ENCODE measurements at regions of chr9 and their contacts with region 1.

Region 1: DNA sequence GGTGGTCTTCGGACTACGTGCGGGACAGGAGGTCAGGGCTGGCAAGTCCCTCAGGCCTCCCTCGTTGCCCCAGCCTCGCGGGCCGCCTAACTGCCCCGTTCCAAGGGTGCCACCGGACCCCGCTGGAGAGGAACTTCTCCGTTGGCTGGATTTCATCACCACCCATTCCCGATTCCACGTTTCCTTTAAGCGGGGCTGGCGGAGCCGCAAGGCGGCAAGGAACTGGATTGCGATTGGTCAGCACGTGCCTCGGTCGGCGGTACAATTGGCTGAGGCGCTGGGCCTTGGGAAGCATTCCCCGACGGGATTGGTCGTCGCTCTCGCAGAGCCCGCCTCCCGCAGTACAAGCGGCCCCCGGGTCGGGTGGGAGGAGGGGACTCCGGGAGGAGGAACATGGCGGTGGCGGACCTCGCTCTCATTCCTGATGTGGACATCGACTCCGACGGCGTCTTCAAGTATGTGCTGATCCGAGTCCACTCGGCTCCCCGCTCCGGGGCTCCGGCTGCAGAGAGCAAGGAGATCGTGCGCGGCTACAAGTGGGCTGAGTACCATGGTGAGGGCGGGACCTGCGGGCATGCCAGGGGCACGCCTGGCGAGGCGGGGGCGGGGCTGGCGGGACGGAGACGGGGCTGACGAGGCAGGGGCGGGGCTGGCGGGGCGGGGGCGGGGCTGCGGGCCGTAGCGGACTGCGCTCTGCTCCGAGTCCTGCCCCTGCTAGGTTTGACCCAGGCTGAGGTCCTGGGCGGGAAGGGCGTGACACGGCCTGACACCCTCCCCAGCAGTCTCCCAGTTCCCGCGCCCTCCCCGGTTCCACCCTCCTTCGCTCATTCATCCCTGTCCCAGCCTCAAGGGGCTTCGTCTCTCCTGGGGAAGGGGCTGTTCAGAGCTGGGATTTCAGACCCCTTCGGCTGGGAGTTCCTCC is at the start of gene PHPT1:
- H3K4me3 Mint-ChIP-seq: peak within 1 kb of the TSS; percentile 97
- H3K27ac Mint-ChIP-seq: peak within 1 kb of the TSS; percentile 94
- H3K4me1 Mint-ChIP-seq: peaks cover 37% of the 10 kb centered on the region
- H3K27me3 Mint-ChIP-seq: peaks cover 22% of the 10 kb centered on the region

Region 2: GRCh38 chr9:136790927-136791641 is 58.2 kb before region 1 on chr9 and contains the start of gene TMEM141:
- intact Hi-C with region 1: loop called (anchors 5 kb)
- H3K4me3 Mint-ChIP-seq: peak within 1 kb of the TSS; percentile 85
- H3K27ac Mint-ChIP-seq: peak within 1 kb of the TSS; percentile 89
- H3K4me1 Mint-ChIP-seq: peaks cover 26% of the 10 kb centered on the region
- H3K27me3 Mint-ChIP-seq: peaks cover 8% of the 10 kb centered on the region

Region 3: DNA sequence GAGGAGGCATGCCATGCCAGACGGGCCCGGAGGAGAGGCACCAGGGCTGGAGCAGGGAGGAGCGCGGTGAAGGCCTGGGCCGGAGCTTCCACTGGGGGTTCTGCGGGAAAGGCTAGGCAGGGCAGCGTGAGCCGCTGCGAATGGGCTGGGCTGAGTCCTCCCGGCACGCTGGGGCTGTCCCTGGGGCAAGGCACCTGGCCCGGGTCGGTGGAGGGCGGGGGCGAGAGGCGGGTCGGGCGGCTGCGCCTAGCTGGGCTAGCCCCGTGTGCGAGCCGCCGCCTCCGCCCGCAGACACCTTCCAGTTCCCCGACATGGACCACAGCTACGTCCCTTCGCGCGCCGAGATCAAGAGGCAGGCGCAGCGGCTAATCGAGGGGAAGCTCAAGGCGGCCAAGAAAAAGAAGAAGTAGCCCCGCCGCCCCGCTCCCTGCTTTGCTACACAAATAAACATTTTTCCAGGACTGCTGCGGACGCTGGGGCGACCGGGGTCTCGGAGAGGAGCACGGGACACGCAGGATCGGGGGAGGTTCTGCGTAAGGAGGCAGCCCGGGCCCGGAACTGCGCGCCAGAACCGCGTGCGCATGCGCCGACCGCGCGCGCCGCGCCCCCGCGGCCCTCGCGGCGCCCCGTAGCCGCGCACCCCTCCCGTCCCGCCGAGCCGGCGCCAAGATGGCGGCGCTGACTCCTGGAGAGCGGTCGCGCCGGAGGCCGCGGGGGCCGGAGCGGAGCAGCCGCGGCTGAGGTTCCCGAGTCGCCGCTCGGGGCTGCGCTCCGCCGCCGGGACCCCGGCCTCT is 41.8 kb before region 1 on chr9 and contains the start of gene RABL6:
- intact Hi-C with region 1: loop called (anchors 2 kb)
- H3K4me3 Mint-ChIP-seq: peak within 1 kb of the TSS; percentile 86
- H3K27ac Mint-ChIP-seq: peak within 1 kb of the TSS; percentile 84
- H3K4me1 Mint-ChIP-seq: peaks cover 39% of the 10 kb centered on the region
- H3K27me3 Mint-ChIP-seq: peaks cover 10% of the 10 kb centered on the region

Region 4: GRCh38 chr9:136865735-136866103 is 16.4 kb after region 1 on chr9:
- intact Hi-C with region 1: loop called (anchors 1 kb)
- H3K4me3 Mint-ChIP-seq: peak overlapping the region; percentile 85
- H3K27ac Mint-ChIP-seq: peak overlapping the region; percentile 85
- H3K4me1 Mint-ChIP-seq: peaks cover 16% of the 10 kb centered on the region
- H3K27me3 Mint-ChIP-seq: no peaks in the 10 kb centered on the region

Region 5: DNA sequence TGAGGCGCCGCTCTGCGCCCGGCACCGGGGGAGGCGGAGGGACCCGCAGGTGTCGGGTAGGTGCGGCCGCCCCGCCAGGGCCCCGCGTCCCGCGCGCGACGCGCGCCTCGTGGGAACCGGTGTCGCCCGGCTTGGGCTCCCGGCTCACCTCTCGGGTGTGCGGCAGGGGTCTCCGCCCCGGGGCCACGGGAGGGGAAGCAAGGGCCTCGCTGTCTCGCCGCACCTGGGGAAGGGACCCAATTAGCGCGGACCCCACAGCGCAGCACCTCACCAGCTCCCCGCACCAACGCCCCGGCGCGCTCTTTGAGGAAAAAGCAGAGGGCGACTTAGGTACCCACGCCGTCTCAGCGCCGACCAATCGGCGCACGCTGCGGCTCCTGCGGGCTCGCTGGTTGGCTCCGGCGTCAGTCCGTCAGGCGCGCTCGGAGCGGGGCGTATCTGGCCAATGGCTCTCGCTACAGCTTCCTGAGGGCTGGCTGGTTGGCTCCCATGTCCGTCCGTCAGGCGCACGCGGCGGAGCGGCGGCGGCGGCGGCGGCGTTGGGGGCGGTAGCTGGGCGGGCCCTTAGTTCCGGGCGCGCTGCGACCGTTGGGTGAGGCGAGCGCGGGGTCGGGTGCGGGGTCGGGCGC is 36.8 kb after region 1 on chr9 and contains the start of gene TRAF2:
- intact Hi-C with region 1: loop called (anchors 1 kb)
- H3K4me3 Mint-ChIP-seq: peak within 1 kb of the TSS; percentile 89
- H3K27ac Mint-ChIP-seq: peak within 1 kb of the TSS; percentile 79
- H3K4me1 Mint-ChIP-seq: peaks cover 46% of the 10 kb centered on the region
- H3K27me3 Mint-ChIP-seq: no peaks in the 10 kb centered on the region

Region 6: DNA sequence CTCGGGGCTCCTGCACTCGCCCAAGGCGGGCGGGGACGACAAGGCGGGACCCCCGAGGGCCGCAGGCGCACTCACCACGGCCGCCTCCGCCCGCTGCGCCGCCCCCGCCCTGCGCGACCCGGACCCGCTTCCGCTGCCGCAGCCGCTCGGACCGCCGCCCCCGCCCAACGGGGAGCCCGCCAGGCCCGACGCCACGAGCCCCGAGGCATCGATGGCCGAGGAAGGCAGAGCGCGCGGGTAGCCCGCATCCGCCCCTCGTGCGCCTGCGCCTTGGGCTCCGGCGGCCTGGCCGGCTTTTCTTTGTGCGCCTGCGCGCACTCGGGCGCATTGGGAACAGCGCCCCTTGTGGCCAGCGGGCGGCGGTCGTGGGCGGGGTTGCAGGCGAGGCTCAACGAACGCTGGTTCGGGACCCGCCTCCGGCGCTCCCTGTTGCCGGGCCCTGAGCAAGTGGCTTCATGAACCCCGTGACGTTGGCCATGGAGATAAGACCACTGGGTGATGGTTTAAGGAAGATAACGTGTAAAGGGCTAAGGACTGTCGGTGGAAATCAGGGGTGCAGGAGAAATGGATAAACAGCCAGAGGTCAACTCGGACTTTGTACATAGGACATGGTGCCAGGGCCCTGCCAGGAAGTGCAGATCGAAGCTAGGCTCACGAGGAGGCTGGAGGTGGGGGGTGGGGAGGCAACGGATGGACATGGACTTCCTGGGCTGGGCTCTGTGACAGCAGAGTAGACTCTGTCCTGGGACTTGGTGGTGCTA is 95.4 kb after region 1 on chr9 and contains the starts of genes C8G and FBXW5:
- intact Hi-C with region 1: loop called (anchors 1 kb)
- H3K4me3 Mint-ChIP-seq: peak within 1 kb of the TSS; percentile 77
- H3K27ac Mint-ChIP-seq: peak within 1 kb of the TSS; percentile 69
- H3K4me1 Mint-ChIP-seq: peaks cover 43% of the 10 kb centered on the region
- H3K27me3 Mint-ChIP-seq: no peaks in the 10 kb centered on the region

Region 7: DNA sequence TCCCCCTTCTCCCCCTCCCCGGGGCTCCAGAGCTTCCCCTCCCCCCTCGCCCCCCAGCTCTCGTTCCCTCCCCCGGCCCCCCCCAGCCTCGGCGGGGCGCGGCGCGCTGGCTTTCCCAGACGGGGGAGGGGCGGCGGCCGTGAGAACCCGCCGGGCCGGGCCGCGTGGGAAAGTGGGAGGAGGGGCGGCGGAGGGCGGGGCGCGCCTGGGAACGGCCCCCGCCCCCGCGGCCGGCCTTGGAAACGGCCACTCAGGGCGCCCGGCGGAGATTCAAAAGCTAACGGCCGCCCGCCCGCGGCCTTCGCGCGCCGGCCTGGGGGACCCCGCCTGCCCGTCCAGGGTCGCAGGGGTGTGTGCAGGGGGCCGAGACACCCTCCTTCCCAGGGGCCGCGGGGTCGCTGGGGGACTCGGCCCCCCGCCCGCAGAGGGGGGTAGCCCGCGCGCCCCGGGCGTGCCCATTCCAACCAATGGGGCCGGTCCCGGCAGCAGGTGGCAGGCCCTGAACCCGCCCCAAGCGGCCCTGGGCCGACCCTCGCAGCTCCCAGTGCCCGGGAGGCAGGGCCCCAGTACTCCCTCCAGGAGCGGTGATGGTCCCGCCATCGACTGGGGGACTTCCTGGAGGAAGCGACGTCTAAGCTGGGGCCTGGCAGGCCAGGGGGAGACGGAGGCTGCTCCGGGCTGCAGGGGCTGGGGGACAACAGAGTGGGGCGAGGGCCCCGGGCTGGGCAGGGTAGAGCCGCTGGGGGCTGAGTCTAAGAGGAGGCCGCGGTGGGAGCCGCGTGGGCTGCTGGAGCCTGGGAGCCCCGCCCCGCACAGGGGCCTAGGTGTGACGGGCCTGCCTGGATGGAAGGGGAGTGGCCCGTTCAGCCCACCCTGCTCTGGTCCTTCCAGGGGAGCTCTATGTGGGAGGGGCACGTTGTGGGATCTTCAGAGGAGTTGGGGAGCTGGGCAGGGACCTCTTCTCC is 467.0 kb after region 1 on chr9:
- intact Hi-C with region 1: no loop called
- H3K4me3 Mint-ChIP-seq: no peak overlapping the region
- H3K27ac Mint-ChIP-seq: peak overlapping the region; percentile 24
- H3K4me1 Mint-ChIP-seq: peaks cover 15% of the 10 kb centered on the region
- H3K27me3 Mint-ChIP-seq: peaks cover 54% of the 10 kb centered on the region